Endothelial cell of umbilical vein (primary cell): ENCODE measurements at regions of chr3 and their contacts with region 1.

Region 1: DNA sequence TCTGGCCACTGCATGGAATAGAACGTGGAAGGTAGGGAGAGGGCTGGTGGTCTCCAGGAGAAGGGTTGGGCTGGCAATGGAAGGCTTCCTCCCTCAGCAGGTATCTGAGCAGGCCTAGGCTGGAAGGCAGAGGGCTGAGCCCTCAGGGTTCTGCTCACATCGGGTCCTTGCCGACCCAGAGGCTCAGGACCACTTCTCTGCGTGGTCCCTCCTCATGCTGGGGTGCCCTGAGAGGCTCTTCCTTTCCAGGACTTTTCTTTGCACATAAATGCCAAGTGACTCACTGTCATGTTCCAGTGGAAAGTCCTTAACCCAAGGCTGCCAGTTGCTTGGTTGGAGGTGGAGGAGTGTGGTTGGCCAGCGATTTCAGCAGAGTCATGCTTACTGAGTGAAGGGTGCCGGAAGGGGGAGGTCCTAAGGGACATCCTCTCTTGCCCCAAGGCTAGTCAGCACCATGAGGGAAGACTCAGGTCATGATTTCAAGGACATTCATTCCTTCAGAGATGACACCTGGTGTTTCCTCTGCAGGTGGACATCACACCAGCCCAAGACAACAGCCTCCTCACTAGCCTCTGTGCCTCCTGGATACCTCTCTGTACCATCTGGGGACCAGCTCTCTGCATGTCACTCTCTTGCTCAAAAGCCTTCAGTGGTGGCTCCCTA is 8.2 kb downstream of the SLC6A6 start:
- DNase-seq: peak; percentile 18
- H3K4me3 ChIP-seq: no peak overlapping the region
- H3K27ac ChIP-seq: peak overlapping the region; percentile 79
- H3K4me1 ChIP-seq: peaks cover 12% of the 10 kb centered on the region
- H3K27me3 ChIP-seq: no peaks in the 10 kb centered on the region
- CTCF ChIP-seq: no peak
- POLR2A ChIP-seq: no peak

Region 2: DNA sequence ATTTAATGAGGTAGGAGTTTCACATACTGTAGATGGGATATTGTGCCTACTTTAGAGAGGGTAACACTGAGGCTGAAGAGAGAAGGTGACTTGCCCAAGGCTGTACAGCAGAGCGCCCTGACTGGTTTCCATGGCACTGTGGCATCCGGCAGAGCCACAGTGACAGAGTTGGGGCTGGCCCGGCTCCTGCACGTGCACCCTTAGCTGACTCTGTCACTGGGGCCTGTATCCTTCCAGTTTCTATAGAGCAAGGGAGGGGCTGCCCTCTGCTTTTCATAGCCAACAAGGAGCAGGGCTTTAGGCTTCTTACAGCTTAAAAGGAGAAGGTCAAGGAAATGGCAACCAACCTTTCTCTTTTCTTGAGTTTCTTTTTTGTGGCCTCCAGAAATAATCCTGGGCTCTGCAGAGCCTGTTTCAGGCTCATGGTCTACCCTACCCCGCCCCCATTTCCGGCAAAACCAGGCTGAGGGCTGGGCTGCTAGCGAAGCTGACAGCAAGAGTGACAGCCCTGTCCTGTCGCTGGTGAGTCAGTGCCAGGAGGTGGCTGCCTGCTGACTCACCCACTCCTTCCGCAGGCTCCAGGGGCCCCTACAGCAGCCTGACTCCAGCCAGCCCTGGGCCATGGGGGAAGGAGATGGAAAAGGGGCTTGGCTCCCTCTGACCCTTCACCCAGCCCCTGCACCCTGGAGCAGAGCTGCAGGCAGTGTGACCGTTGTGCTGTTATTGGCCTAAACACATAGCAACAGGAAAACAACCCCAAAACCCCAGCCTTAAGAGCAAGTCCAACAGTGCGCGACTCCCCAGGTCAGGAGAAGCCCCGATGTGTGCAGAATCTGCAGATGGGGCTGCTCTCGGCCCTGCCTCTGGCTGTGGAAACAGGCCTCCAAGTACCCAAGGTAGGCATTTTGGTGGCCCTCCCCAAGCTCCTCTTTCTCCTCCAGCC is 21.5 kb after region 1 on chr3:
- CTCF ChIA-PET with region 1: interaction called, 6 read pairs
- POLR2A ChIA-PET with region 1: no interaction called
- dilution Hi-C with region 1: no loop called
- intact Hi-C with region 1: loop called (anchors 2 kb)
- DNase-seq: peak; percentile 83
- H3K4me3 ChIP-seq: no peak overlapping the region
- H3K27ac ChIP-seq: peak overlapping the region; percentile 77
- H3K4me1 ChIP-seq: peaks cover 56% of the 10 kb centered on the region
- H3K27me3 ChIP-seq: no peaks in the 10 kb centered on the region
- CTCF ChIP-seq: no peak
- POLR2A ChIP-seq: no peak

Region 3: DNA sequence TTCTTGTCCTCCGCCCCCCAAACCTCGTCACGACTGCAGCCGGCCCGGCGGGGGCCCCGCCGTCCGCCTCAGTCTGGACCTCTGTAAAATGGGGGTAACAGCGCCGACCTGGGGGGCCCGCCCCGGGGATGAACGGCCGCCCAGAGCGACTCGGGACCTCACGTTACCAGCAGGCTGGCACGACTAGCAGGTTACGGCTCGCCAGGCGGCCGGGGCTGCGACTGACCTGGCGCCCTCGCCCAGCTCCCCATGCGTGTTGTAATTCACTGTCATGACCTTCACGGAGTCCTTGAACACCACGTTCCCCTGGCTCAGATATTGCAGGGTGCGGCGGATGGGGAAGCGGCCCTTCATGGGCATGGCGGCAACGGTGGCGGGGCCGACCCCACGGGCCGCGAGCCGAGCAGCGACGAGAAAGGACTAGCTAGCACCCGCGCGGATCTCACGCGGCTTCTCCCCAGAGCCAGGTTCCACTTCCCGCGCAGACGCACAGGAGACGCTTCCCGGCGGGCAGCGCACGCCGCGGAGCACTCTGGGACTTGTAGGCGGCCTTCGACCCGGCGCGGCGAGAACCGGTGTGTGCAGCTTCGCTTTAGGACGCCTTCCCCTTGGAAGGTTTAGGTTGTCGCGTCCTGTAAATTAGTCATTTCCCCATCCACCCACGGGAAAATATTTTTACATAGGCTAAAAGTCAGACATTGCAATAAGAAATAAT is 654.4 kb after region 1 on chr3 and contains the start of gene MRPS25:
- CTCF ChIA-PET with region 1: no interaction called
- POLR2A ChIA-PET with region 1: no interaction called
- dilution Hi-C with region 1: no loop called
- intact Hi-C with region 1: no loop called
- DNase-seq: peak; percentile 96
- H3K4me3 ChIP-seq: peak within 1 kb of the TSS; percentile 40 to 71 (median 66)
- H3K27ac ChIP-seq: peak within 1 kb of the TSS; percentile 42
- H3K4me1 ChIP-seq: peaks cover 10% of the 10 kb centered on the region
- H3K27me3 ChIP-seq: no peaks in the 10 kb centered on the region
- CTCF ChIP-seq: no peak
- POLR2A ChIP-seq: peak; percentile 96
- total RNA-seq, gene MRPS25: 58.1 and 68.7 TPM in 2 replicates